CD8-positive, alpha-beta memory T cell (primary cell): ENCODE measurements at regions of chr5 and their contacts with region 1.

Region 1: DNA sequence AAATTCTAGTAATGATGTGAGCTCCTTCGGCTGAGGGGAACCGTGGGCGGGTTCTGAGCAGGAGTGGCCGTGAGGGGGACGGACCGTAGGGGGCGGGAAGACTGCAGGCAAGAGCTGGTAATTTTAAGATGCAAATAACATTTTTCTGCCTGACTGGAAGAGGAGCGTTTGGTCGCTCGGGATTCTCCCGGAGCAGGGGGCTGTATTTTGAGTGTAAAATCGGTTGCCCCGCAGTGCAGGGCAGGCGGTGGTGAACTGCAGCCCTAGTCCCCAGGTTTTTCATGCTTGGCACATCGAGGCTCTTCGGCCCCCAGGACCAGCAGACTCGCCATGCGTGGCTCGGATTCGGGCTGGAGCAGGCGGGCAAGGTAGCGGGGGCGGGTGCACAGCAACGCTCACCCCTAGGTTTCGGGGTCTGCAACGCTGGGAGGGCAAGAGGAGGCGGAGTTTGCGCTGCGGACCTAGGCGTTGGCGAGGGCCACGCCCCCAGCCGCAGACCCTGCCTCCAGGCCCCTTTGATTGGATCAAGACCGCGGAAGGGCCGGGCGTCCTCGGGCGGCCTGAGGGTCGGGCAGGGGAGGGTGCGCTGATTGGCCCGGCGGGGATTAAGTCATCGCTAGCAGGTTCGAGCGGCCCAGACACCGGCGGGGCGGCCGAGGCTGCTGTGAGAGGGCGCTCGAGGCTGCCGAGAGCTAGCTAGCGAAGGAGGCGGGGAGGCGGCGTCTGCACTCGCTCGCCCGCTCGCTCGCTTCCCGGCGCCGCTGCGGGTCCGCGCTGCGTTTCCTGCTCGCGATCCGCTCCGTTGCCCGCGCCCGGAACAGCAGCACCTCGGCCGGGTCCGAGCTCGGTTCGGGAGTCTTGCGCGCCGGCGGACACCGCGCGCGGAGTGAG is at the start of gene ARHGAP26:
- DNase-seq: peak; percentile 90 to 95 (median 92)
- H3K4me3 ChIP-seq: peak within 1 kb of the TSS; percentile 89
- H3K4me3 Mint-ChIP-seq: peak within 1 kb of the TSS; percentile 93 to 98 (median 96)
- H3K27ac ChIP-seq: peak within 1 kb of the TSS; percentile 75
- H3K27ac Mint-ChIP-seq: peak within 1 kb of the TSS; percentile 83 to 98 (median 96)
- H3K4me1 ChIP-seq: peaks cover 33% of the 10 kb centered on the region
- H3K4me1 Mint-ChIP-seq: peaks cover 39 to 46% (median 44%) of the 10 kb centered on the region in 3 donors
- H3K27me3 ChIP-seq: no peaks in the 10 kb centered on the region
- H3K27me3 Mint-ChIP-seq: no peaks in the 10 kb centered on the region
- total RNA-seq, gene ARHGAP26: 16.7 to 19.7 TPM

Region 2: GRCh38 chr5:142783601-142784341 is 13.8 kb after region 1 on chr5:
- CTCF ChIA-PET with region 1: interaction called, 98 read pairs
- POLR2A ChIA-PET with region 1: interaction called, 28 read pairs
- DNase-seq: peak in 4 of 5 donors; percentile 33 to 76 (median 49)
- H3K4me3 ChIP-seq: peak overlapping the region; percentile 42
- H3K4me3 Mint-ChIP-seq: peak overlapping the region; percentile 66 to 93 (median 87)
- H3K27ac ChIP-seq: peak overlapping the region; percentile 38
- H3K27ac Mint-ChIP-seq: peak overlapping the region; percentile 72 to 99 (median 93)
- H3K4me1 ChIP-seq: peaks cover 76% of the 10 kb centered on the region
- H3K4me1 Mint-ChIP-seq: peaks cover 89 to 93% (median 91%) of the 10 kb centered on the region in 3 donors
- H3K27me3 ChIP-seq: no peaks in the 10 kb centered on the region
- H3K27me3 Mint-ChIP-seq: no peaks in the 10 kb centered on the region

Region 3: DNA sequence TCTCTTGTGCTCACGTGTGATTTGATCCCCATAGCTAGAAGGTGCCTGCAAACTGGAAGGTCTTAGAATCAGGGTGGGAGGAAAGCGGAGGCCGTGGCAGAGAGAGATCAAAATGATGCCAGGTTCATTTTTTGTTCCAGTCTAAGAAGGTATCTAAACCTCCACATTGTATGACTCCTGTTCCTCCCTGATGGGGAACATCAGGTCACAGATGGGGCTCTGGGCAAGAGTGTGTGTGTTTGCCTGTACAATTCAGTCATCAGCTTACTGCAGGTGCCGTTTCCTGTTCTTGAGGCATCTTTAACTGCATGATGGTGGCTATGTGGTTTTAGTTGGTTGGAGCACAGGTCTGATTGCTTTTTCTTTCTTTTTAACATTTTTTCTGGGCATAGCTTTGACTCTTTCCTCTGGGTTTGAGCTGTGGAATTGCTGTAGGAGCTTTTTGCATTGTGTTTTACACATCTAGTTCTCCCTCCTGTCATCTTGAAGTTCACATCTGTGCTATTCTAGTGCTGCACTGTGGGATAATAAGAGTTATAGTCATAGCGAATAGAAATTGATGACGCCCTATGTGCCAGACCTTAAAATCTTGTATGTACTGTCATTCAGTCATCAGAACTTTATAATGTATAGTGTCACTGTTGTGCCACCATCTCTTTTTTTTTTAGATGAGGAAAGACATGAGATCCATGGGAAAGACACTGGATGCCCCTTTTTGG is 30.9 kb after region 1 on chr5:
- CTCF ChIA-PET with region 1: interaction called, 55 read pairs
- POLR2A ChIA-PET with region 1: interaction called, 39 read pairs
- DNase-seq: peak; percentile 23 to 71 (median 70)
- H3K4me3 ChIP-seq: peak overlapping the region; percentile 33
- H3K4me3 Mint-ChIP-seq: peak overlapping the region; percentile 64 to 89 (median 78)
- H3K27ac ChIP-seq: peak overlapping the region; percentile 32
- H3K27ac Mint-ChIP-seq: peak overlapping the region; percentile 85 to 98 (median 94)
- H3K4me1 ChIP-seq: peaks cover 60% of the 10 kb centered on the region
- H3K4me1 Mint-ChIP-seq: peaks cover 82 to 95% (median 86%) of the 10 kb centered on the region in 3 donors
- H3K27me3 ChIP-seq: no peaks in the 10 kb centered on the region
- H3K27me3 Mint-ChIP-seq: peaks cover 0 to 2% of the 10 kb centered on the region in 2 donors

Region 4: DNA sequence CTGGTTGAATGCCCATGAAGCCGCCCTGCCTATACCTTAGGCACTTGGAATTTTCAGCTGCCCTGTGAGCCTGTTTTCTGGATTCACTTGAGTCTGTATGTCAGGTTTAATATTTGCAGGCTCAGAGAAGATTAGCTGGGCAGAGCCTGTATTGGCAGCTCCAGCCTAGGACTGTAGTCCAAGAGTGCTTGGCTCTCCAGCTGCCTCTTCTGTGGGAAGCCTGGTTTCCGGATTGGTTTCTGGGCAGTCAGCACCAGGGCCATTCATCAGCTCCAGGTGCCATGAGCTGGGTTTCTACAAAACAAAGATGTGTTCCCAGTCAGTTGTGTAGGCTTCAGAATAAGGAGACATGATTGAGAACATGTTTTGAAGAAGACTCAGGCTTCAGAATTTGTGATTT is 90.3 kb after region 1 on chr5:
- CTCF ChIA-PET with region 1: interaction called, 24 read pairs
- POLR2A ChIA-PET with region 1: interaction called, 4 read pairs
- DNase-seq: no peak
- H3K4me3 ChIP-seq: no peak overlapping the region
- H3K4me3 Mint-ChIP-seq: no peak overlapping the region
- H3K27ac ChIP-seq: no peak overlapping the region
- H3K27ac Mint-ChIP-seq: peak overlapping the region in 2 of 8 donors; percentile 1 to 66
- H3K4me1 ChIP-seq: peaks cover 11% of the 10 kb centered on the region
- H3K4me1 Mint-ChIP-seq: peaks cover 83 to 92% (median 87%) of the 10 kb centered on the region in 3 donors
- H3K27me3 ChIP-seq: no peaks in the 10 kb centered on the region
- H3K27me3 Mint-ChIP-seq: no peaks in the 10 kb centered on the region

Region 5: DNA sequence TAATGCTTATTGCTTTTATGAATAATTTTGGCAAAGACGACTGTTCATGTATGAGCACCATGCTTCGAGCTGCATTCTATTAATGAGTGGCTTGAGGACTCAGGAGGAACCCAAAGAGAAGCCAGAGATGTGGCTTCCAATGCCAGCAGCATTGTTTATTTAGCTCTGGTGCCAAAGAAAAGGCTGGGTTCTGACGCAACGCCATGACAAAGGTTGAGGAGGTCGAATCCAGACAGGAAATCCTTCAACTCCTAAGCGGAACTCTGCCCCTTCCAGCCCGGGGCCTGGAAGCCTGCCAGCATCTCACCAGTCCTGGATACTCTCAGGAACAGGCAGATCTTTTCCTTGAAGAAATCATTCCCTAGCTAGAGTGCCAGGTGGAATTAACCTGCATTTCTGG is 104.6 kb after region 1 on chr5:
- CTCF ChIA-PET with region 1: interaction called, 13 read pairs
- POLR2A ChIA-PET with region 1: interaction called, 3 read pairs
- DNase-seq: no peak
- H3K4me3 ChIP-seq: no peak overlapping the region
- H3K4me3 Mint-ChIP-seq: no peak overlapping the region
- H3K27ac ChIP-seq: no peak overlapping the region
- H3K27ac Mint-ChIP-seq: peak overlapping the region in 1 of 8 donors; percentile 4
- H3K4me1 ChIP-seq: no peaks in the 10 kb centered on the region
- H3K4me1 Mint-ChIP-seq: peaks cover 30 to 35% (median 30%) of the 10 kb centered on the region in 3 donors
- H3K27me3 ChIP-seq: no peaks in the 10 kb centered on the region
- H3K27me3 Mint-ChIP-seq: no peaks in the 10 kb centered on the region

Region 6: GRCh38 chr5:142881076-142881783 is 111.2 kb after region 1 on chr5:
- CTCF ChIA-PET with region 1: interaction called, 11 read pairs
- POLR2A ChIA-PET with region 1: no interaction called
- DNase-seq: no peak
- H3K4me3 ChIP-seq: no peak overlapping the region
- H3K4me3 Mint-ChIP-seq: no peak overlapping the region
- H3K27ac ChIP-seq: no peak overlapping the region
- H3K27ac Mint-ChIP-seq: peak overlapping the region in 1 of 8 donors; percentile 70
- H3K4me1 ChIP-seq: no peaks in the 10 kb centered on the region
- H3K4me1 Mint-ChIP-seq: peaks cover 19 to 25% (median 20%) of the 10 kb centered on the region in 3 donors
- H3K27me3 ChIP-seq: no peaks in the 10 kb centered on the region
- H3K27me3 Mint-ChIP-seq: no peaks in the 10 kb centered on the region